ENCODE measurements at regions of chr9 and their contacts with region 1.

Region 1: DNA sequence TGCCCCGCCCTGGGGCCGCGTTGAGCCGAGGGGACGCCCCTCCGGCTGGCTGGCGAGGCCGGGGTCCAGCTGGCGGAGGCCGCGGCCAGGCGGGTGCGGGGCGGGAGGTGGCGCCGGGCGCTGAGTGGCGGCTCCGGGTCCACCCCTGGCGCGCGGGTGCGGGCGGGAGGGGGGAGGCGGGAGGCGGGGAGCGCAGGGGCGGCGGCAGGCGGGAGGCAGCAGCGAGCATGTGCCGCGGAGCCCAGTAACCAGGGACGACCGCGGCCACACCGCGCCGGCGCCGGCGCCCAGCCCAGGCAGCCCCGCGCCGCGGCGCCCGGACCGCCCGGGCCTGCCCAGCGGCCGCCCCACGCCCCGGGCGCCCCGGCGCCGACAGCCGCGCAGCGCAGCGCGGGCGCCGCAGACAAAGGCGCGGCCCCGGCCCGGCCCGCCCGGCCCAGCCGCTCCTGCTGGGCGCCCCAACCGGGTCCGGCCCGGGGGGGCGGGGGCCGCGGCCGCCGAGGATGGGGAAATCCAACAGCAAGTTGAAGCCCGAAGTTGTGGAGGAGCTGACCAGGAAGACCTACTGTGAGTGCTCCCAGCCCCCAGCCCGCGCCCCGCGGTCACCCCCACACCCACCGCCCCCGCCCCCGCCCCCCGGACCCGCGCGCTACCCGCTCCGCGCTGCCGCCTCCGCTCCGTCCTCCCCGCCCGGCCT is at the start of gene NCS1:
- DNase-seq: peak; percentile 64 to 89 (median 81)
- H3K4me3 ChIP-seq: peak within 1 kb of the TSS; percentile 54 to 80 (median 68)
- H3K27ac ChIP-seq: peak within 1 kb of the TSS; percentile 47 to 93 (median 86)
- H3K27me3 ChIP-seq: no peaks in the 10 kb centered on the region
- CTCF ChIP-seq: no peak
- total RNA-seq, gene NCS1: 134 to 718 (median 501) TPM

Region 2: DNA sequence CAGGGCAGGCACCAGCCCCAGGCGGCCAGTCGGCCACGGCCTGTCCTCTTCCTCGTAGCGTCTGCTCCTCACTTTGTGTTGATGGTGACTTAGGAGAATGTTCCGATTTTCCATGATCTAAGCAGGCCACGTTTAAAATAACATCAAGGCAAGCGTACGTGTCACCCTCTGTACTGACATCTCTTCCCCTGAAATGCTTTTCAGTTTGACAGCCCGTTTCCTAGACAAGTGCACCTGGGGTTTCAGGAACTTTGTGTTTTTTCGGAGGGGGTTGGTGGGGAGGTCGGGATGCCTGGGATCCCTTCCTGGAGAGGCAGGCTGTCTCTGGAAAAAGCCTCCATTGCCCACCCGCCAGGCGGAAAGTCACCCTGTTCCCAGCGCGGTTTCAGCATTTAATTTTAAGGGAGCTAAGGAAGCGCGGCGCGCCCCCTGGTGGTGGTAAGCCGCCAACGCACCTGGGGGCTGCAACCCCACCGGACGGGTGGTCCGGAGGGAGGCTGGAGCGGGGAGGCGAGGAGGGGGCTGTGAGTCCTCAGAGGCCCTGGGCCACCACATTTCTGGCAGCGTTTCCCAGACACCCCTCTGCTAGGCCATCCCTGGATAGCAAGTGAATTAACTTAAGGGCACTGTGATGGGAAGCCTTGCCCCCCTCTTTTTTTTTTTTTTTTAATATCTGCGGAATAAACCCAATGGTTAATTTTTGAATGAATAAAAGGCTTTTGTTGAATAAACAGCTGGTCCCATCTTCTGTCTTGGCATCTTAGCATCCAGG is 63.8 kb after region 1 on chr9:
- intact Hi-C with region 1: loop called in 1 of 2 experiments (anchors 5 kb)
- DNase-seq: peak in 9 of 10 donors; percentile 61 to 81 (median 68)
- H3K4me3 ChIP-seq: peak overlapping the region in 36 of 59 donors; percentile 1 to 47 (median 34)
- H3K27ac ChIP-seq: peak overlapping the region in 55 of 59 donors; percentile 3 to 90 (median 73)
- H3K27me3 ChIP-seq: no peaks in the 10 kb centered on the region
- CTCF ChIP-seq: peak; percentile 97 to 100 (median 99)

Region 3: DNA sequence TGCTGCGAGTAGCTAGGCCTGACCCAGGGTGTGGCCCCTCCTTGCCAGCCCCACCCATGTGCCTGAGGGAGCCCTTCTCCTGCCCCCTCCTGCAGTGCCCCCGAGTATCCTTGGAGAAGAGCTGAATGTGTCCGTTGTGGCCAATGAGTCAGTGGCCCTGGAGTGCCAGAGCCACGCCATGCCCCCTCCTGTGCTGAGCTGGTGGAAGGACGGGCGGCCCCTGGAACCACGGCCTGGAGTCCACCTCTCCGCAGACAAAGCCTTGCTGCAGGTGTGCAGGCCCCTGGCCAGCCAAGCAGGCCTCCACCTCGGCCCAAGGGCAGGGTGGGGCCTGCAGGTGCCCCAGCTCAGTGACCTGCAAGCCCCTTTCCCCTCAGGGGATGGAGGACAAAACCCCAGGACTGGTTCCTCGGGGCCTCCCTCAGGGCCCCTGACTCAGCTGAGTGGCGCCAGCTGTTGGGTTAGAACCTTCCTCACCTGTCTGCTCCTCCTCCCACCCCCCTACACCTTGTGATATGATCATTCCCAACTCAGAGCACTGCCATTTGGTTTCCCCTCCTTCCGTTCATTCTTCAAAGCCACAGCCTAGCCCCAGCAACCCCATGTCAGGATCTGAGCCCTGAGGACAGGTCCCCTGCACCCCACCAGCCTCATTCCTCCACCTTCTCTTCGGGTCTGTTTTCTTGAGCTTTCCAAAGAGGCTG is 192.5 kb after region 1 on chr9:
- intact Hi-C with region 1: no loop called
- DNase-seq: no peak
- H3K4me3 ChIP-seq: no peak overlapping the region
- H3K27ac ChIP-seq: no peak overlapping the region
- H3K27me3 ChIP-seq: no peaks in the 10 kb centered on the region
- CTCF ChIP-seq: no peak

Measured in dorsolateral prefrontal cortex (tissue), 120 donors.